ENCODE measurements at regions of chr14 and their contacts with region 1.

Region 1: GRCh38 chr14:92471919-92472318 is 41.7 kb upstream of the RIN3 start:
- DNase-seq: peak; percentile 70
- H3K4me3 Mint-ChIP-seq: no peak overlapping the region
- H3K27ac Mint-ChIP-seq: peak overlapping the region; percentile 30
- H3K4me1 Mint-ChIP-seq: peaks cover 43% of the 10 kb centered on the region
- H3K27me3 Mint-ChIP-seq: no peaks in the 10 kb centered on the region
- CTCF ChIP-seq: no peak

Region 2: DNA sequence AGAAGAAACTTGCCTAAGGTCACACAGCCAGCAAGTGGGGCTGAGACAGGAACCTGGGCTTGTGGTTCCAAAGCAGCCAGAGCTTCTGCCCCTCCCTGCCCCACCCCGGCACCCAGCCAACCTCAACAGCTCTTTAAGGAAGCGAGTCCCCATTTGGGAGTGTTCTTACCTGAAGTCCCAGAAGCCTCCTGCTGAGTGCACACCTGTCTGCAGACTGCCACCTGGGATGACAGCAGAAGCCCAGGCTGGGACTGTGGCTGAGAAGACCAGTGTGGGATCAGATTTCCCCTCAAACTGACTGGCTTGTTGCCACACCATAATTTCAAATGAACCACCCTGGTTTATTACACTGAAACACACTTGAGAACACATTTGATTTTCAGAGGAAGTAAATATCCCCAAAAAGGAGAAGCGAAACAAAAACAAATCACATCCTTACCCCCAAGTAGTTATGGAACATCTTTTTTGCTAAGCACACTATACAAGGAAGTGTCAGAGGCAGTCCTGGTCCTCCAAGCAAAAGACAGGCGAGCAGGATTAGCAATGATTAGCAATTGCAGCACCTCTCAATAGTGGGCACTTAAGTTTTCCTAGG is 35.4 kb after region 1 on chr14:
- CTCF ChIA-PET with region 1: interaction called, 3 read pairs
- intact Hi-C with region 1: loop called (anchors 5 kb)
- DNase-seq: peak; percentile 68
- H3K4me3 Mint-ChIP-seq: no peak overlapping the region
- H3K27ac Mint-ChIP-seq: no peak overlapping the region
- H3K4me1 Mint-ChIP-seq: peaks cover 58% of the 10 kb centered on the region
- H3K27me3 Mint-ChIP-seq: no peaks in the 10 kb centered on the region
- CTCF ChIP-seq: no peak

Region 3: GRCh38 chr14:92540472-92541053 is 68.6 kb after region 1 on chr14:
- CTCF ChIA-PET with region 1: no interaction called
- intact Hi-C with region 1: loop called (anchors 5 kb)
- DNase-seq: peak; percentile 83
- H3K4me3 Mint-ChIP-seq: no peak overlapping the region
- H3K27ac Mint-ChIP-seq: no peak overlapping the region
- H3K4me1 Mint-ChIP-seq: peaks cover 33% of the 10 kb centered on the region
- H3K27me3 Mint-ChIP-seq: no peaks in the 10 kb centered on the region
- CTCF ChIP-seq: no peak